ENCODE measurements at regions of chr7 and their contacts with region 1.

Region 1: DNA sequence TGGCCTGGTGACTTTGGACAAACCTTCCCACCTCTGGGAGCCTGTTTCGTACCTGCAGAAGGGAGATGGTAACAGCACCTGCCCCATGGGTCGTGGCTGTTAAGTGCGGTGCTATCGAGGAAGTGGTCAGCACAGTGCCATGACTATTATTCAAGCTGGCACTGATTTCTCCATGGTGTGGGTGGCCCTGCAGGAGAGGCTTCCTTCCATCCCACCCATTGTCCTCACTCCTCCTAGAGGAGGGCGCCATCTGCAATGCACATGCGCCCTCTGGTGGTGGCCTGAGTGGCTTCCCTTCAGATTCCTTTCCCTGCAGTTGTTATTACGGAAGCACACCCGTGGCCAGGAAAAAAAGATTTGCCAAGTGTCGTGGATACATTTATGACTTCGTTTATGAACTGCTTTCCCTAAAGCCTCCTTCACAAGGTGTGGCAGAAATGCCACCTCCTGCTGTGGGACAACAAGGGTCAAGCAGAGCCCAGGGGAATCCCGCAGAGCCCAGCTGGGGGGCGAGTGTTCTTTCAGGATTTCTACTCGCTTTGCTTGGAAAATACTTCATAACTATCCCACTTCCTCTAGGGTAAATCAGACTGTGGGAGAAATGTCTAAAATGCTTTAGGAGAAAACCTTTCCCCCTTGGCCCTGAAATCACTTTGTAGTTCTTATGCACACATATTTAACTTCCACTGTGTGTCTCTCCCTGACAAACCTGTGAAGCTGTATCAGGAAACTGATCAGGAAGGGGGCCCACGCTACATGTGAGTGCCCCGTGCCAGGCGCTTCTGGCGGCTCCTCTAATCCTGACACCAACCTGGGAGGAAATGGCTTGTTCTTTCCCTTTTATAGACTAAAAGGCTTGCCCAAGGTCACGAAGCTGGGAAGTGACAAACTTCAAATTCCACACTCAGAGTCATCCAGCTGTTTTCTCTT is 98.0 kb upstream of the ANLN start:
- DNase-seq: peak; percentile 70
- H3K4me3 ChIP-seq: peak overlapping the region; percentile 29
- H3K27ac ChIP-seq: peak overlapping the region; percentile 90
- H3K27me3 ChIP-seq: no peaks in the 10 kb centered on the region
- CTCF ChIP-seq: peak; percentile 97

Region 2: DNA sequence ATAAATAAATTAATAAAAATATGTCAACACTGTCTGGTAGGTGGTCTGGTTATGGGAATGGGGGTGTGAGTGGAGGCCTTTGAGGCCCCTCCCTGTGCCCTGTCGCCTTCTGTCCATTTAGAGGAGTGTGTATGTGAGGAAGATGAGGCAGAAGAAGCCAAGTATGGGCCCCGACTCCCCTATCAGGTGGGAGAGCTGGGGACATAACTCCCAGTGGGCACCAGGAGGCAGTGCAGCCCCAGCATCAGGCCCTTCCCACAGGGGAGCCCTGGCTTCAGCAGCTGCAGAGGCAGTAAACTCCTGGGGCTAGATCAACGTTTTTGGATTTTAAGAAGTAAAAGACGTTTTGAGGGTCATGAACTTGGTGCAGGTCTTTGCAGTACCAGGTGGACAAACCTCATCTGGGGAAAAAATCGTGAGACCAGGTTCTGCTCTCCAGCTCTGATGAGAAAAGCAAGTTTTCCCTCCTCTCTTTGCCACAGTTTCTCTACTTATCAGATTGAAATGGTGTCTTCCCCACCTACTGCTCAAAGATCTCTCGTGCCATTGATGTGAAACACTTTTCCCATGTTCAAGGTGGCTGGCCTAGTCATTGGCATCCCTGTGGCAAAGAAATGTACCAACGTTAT is 306.4 kb before region 1 on chr7:
- CTCF ChIA-PET with region 1: interaction called, 69 read pairs
- POLR2A ChIA-PET with region 1: interaction called, 7 read pairs
- DNase-seq: peak; percentile 39
- H3K4me3 ChIP-seq: no peak overlapping the region
- H3K27ac ChIP-seq: no peak overlapping the region
- H3K27me3 ChIP-seq: peaks cover 4% of the 10 kb centered on the region
- CTCF ChIP-seq: peak; percentile 98

Region 3: DNA sequence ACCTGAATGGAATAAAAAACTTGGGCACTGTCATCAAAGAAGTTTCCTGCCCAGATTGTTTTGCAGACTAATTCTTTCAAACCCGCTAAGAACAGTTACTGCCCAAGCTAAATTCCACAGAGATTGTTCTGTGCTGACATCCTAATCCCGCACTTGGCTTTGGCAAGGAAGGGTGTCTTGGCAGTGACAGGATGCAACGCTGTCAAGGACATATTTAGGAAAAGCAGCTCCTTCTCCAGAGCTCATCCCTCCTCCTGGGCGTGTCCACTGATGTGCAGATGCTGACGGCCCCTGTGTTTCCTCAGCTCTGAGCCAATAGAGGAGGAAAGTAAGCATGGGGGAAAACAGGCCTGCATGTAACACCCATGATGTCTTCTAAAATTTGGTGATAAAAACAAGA is 64.4 kb before region 1 on chr7:
- CTCF ChIA-PET with region 1: no interaction called
- POLR2A ChIA-PET with region 1: interaction called, 11 read pairs
- DNase-seq: no peak
- H3K4me3 ChIP-seq: no peak overlapping the region
- H3K27ac ChIP-seq: peak overlapping the region; percentile 47
- H3K27me3 ChIP-seq: no peaks in the 10 kb centered on the region
- CTCF ChIP-seq: no peak

Measured in AG04450 (cell line).